Panc1 (cell line): ENCODE measurements at regions of chr2 and their contacts with region 1.

Region 1: DNA sequence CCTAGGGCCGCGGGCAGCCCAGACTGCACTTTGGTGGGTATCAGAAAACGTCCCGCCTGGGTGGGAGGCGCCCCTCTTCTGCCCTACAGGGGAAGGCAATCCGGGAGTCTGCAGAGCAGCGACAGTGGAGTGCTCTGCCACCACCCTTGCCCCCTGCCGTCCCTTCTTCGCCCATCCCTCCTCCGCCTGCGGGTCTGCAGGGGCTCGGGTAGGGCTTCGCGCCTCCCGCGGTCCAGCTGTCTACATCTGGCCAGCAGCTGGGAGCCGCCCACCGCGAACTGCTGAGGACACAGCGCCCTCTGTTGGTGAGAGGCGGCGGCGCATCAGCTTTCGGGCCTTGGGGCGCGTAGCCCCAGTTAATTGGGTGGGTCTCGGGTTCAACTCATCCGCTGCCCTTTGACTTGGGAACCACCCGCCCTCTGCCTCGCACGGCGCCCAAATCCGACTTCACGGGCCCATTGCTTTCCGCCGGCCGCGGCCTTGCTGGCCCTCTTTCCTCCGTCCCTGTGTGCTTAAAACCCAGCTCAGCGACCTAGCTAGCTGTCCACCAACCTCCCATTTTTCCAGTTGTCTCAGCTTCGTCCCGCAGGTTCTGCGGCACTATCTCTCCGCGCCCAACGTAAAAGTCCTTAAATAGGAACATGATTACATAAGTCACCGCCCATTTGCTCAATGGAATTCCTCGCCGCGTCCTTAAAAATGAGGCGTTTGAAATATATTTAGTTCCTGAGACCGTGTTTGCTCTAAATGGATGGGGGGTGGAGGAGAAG is 17.6 kb downstream of the WNT10A start:
- DNase-seq: no peak
- ATAC-seq: peak; percentile 59
- H3K4me3 ChIP-seq: peak overlapping the region; percentile 27 to 62
- H3K27ac ChIP-seq: peak overlapping the region; percentile 80
- H3K4me1 ChIP-seq: peaks cover 46% of the 10 kb centered on the region
- H3K27me3 ChIP-seq: no peaks in the 10 kb centered on the region
- CTCF ChIP-seq: peak; percentile 98

Region 2: DNA sequence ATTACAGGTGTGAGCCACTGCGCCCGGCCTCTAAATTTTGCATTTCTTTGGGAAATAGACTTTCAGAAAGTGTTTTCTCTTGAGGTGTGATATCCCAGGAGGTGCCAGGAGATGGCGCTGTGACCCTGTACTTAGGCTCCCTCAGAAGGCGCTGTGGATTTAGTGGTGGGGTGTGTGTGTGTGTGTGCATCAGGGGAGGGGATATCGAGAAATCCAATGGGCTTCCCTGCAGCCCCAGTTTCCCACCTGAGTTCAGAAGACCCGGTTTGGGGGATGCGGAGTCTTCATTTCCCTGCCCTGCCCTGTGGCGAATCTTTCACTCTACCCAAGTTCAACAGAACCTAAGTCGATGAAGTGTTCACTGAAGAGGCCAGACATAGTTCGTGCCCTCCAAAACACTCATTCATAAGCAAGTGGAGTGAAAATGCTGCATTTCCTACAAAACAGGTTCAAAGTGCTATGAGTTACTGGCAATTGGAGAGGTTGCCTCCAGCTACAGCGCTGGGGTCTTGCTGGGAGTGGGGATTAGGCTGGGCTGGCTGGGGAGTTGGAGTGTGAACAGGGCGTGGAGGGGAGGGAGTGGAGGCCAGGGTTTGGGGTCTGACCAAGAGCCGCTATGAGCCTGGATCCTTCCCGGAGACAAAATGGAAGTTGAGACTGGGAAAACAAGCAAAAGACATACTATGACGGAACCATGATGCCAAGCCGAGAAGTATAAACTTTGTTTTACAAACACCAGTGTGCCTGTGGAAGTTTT is 45.2 kb before region 1 on chr2:
- CTCF ChIA-PET with region 1: interaction called, 5 read pairs
- POLR2A ChIA-PET with region 1: no interaction called
- in situ Hi-C with region 1: no loop called
- intact Hi-C with region 1: loop called (anchors 2 kb)
- DNase-seq: peak; percentile 38
- ATAC-seq: peak; percentile 62
- H3K4me3 ChIP-seq: no peak overlapping the region
- H3K27ac ChIP-seq: no peak overlapping the region
- H3K4me1 ChIP-seq: peaks cover 17% of the 10 kb centered on the region
- H3K27me3 ChIP-seq: no peaks in the 10 kb centered on the region
- CTCF ChIP-seq: peak; percentile 90

Region 3: GRCh38 chr2:218876562-218877219 is 21.6 kb before region 1 on chr2:
- CTCF ChIA-PET with region 1: interaction called, 102 read pairs
- POLR2A ChIA-PET with region 1: interaction called, 5 read pairs
- in situ Hi-C with region 1: no loop called
- intact Hi-C with region 1: loop called (anchors 1 kb)
- DNase-seq: peak; percentile 70
- ATAC-seq: peak; percentile 66
- H3K4me3 ChIP-seq: no peak overlapping the region
- H3K27ac ChIP-seq: no peak overlapping the region
- H3K4me1 ChIP-seq: peaks cover 24% of the 10 kb centered on the region
- H3K27me3 ChIP-seq: no peaks in the 10 kb centered on the region
- CTCF ChIP-seq: peak; percentile 96